Activated CD4-positive, alpha-beta T cell treated with anti-CD3 and anti-CD28 coated beads for 36 hours (primary cell): ENCODE measurements at regions of chr11 and their contacts with region 1.

Region 1: GRCh38 chr11:47587723-47588326 is 1.3 kb downstream of the FAM180B start:
- DNase-seq: no peak
- ATAC-seq: no peak
- H3K4me3 Mint-ChIP-seq: no peak overlapping the region
- H3K27ac Mint-ChIP-seq: no peak overlapping the region
- H3K4me1 Mint-ChIP-seq: no peaks in the 10 kb centered on the region
- H3K27me3 Mint-ChIP-seq: peaks cover 6% of the 10 kb centered on the region

Region 2: GRCh38 chr11:47523468-47524225 is 64.2 kb before region 1 on chr11:
- CTCF ChIA-PET with region 1: no interaction called
- POLR2A ChIA-PET with region 1: interaction called, 12 read pairs
- intact Hi-C with region 1: no loop called
- DNase-seq: peak; percentile 67
- ATAC-seq: peak; percentile 77
- H3K4me3 Mint-ChIP-seq: peak overlapping the region; percentile 32
- H3K27ac Mint-ChIP-seq: peak overlapping the region; percentile 85
- H3K4me1 Mint-ChIP-seq: peaks cover 72% of the 10 kb centered on the region
- H3K27me3 Mint-ChIP-seq: no peaks in the 10 kb centered on the region